H1 (cell line): ENCODE measurements at regions of chr3 and their contacts with region 1.

Region 1: DNA sequence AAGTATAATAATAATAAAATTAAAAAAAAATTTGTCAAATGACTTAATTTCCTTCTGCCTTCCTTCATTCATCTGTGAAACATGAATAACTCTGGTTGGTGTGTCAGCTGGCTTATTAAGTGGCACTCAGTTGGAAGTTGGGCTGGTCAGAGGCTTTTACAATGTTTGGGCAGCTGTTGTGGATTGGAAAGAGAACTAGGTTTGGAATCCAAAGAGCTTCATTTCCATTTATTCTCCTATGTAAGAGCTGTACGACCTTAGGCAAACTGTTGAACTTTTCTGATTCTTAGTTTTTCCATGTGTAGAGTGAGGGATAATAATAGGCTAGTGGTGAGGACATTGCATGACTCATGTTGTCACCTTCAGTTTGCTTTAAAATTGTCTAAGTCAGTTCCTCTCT is 606.7 kb downstream of the PDCD6IP start:
- DNase-seq: no peak
- H3K4me3 ChIP-seq: no peak overlapping the region
- H3K27ac ChIP-seq: no peak overlapping the region
- H3K4me1 ChIP-seq: peaks cover 0 to 6% (median 2%) of the 10 kb centered on the region in 4 experiments; a peak in 1 of 7 replicates
- H3K27me3 ChIP-seq: no peaks in the 10 kb centered on the region
- CTCF ChIP-seq: no peak
- EP300 ChIP-seq: no peak
- POLR2A ChIP-seq: no peak
- RAD21 ChIP-seq: no peak

Region 2: DNA sequence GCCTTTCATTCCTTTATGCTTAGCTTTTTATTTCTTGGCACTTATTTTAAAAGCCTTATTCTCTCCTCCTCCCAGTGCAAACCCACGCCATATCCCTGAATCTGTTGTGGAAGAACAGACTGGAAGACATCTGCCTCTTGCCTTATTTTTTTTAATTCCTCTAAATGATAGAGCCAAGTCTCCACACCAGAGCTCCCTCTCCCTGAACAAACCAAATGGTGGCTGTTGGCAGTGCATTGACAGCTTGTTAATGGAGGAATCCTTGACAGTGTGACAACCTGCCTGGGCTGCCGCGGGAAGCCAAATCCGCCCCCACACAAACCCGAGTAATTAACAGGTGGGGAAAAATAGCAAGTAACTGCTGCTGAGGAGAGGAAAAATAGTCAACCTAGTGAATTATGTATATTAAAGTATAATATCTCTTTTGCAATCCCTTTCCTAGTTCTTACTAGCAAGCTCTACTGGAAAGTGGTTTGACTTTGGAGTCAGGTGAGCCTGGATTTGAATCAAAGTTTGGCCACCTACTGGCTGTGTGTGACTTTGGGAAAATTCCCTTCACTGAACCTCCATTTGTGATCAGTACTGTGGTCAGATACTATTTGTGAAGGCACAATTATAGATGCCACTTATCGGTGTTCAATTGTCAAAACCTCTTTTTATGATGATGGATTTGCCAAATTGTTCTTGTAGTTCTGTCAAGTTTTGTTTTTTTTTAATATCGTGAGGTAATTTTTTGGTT is 17.2 kb before region 1 on chr3:
- CTCF ChIA-PET with region 1: interaction called, 11 read pairs
- POLR2A ChIA-PET with region 1: no interaction called
- DNase-seq: no peak
- H3K4me3 ChIP-seq: no peak overlapping the region
- H3K27ac ChIP-seq: no peak overlapping the region
- H3K4me1 ChIP-seq: no peaks in the 10 kb centered on the region; a peak in 1 of 7 replicates
- H3K27me3 ChIP-seq: no peaks in the 10 kb centered on the region; a peak in 1 of 7 replicates
- CTCF ChIP-seq: peak in 2 of 3 experiments; percentile 21 to 44; a peak in 1 of 4 replicates
- EP300 ChIP-seq: no peak
- POLR2A ChIP-seq: no peak
- RAD21 ChIP-seq: peak in 1 of 2 experiments; percentile 36; a peak in 3 of 4 replicates

Region 3: GRCh38 chr3:34421762-34422161 is 16.6 kb after region 1 on chr3:
- CTCF ChIA-PET with region 1: no interaction called
- POLR2A ChIA-PET with region 1: no interaction called
- DNase-seq: no peak
- H3K4me3 ChIP-seq: no peak overlapping the region
- H3K27ac ChIP-seq: no peak overlapping the region
- H3K4me1 ChIP-seq: peaks cover 0 to 2% (median 0%) of the 10 kb centered on the region in 4 experiments; a peak in 1 of 7 replicates
- H3K27me3 ChIP-seq: no peaks in the 10 kb centered on the region
- CTCF ChIP-seq: no peak
- EP300 ChIP-seq: no peak
- POLR2A ChIP-seq: no peak
- RAD21 ChIP-seq: no peak